Right ventricle myocardium inferior (tissue), 1 donor: ENCODE measurements at regions of chr13 and their contacts with region 1.

Region 1: DNA sequence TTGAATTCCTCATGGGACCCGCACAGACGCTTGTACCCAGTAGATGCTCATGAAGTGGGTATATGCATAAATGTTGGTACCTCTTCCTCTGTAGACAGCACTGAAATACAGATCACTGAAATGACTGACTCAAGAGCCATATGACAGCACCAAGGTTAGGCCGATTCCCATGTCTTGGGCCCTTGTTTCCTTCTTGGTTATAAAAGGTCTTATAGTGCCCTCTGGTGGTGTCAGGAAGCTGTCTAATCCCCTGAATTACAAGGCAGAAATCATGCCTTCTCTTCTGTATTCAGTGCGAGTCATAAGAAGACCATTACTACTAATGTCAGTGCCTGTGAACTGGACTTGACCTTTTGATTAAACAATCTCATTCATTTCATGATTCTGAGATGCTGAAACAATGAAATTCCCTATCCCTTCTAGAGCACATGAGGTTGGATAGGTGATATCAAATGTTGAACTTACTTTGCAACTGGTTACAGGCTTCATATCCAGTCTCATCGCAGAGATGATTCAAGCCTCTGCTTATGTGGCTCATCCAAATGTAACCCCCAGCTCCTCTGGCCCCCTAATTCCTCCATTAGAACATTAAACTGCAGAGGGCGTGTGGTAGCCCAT is 59.7 kb downstream of the SPATA13 start:
- DNase-seq: no peak
- ATAC-seq: peak; percentile 74

Region 2: DNA sequence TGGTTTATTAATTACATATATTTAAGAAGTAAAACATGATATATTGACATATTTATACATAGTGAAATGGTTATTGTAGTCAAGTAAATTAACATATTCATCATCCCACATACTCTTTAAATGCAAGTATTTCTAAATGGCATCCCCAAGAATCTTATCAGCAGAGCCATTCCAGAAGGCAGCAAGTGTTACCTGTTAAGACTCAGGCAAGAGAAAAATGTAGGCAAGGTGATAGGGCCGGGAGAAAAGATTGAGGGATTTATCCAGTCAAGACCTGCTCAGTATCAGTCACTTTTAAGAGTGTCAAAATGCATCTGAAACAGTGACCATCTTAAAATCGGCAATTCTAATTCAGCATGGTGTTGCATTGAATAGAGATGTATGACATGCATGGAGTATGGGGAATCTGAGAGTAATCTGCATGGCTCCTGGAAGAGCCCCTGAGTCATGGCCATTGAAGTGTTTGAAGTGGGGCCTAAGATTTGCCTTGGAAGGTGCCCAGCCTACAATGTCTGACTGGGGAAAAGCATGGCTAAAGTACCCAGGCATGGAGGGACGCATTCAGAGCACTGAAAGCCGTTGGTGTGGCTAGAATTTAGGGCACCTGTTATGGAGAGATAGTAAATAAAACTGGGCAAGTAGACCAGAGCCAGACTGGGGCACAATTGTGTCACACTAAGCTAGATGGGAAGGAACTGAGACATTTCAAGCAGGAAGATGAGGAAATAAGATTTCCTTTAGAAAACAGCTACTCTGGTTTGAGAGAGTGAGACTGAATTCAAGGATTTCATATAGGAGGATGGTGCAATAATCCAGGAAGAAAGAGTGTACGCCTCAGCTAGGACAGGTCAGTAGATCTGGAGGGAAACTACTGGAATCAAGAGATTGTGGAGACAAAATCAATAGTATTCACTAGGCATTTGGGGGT is 297.9 kb before region 1 on chr13:
- intact Hi-C with region 1: loop called (anchors 2 kb)
- DNase-seq: no peak
- ATAC-seq: no peak

Region 3: DNA sequence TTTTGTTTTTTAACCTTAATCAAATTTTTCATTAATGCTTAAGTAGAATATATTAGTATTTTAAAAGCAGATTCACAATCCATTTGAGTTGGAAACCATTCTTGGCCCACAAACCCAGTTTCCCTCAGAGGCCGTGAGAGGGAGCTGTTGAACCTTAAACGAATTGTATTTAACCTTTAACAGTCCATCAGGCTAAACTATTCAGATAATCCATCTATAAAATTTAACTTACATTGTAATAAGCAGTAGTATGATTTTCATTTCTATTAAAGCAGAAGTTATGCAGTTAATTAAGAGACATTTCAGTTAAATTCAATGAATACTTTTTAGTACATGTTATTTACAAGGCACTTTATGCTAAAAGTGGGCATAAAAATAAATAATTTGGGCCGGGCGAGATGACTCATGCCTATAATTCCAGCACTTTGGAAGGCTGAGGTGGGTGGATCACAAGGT is 199.8 kb before region 1 on chr13:
- intact Hi-C with region 1: loop called (anchors 2 kb)
- DNase-seq: no peak
- ATAC-seq: no peak

Region 4: GRCh38 chr13:24053519-24054251 is 166.5 kb before region 1 on chr13:
- intact Hi-C with region 1: loop called (anchors 1 kb)
- DNase-seq: no peak
- ATAC-seq: peak; percentile 53

Region 5: GRCh38 chr13:24160454-24161009 is 59.7 kb before region 1 on chr13 and contains the start of gene SPATA13:
- intact Hi-C with region 1: loop called (anchors 2 kb)
- DNase-seq: peak; percentile 97
- ATAC-seq: peak; percentile 98
- total RNA-seq, gene SPATA13: 9.9 TPM

Region 6: DNA sequence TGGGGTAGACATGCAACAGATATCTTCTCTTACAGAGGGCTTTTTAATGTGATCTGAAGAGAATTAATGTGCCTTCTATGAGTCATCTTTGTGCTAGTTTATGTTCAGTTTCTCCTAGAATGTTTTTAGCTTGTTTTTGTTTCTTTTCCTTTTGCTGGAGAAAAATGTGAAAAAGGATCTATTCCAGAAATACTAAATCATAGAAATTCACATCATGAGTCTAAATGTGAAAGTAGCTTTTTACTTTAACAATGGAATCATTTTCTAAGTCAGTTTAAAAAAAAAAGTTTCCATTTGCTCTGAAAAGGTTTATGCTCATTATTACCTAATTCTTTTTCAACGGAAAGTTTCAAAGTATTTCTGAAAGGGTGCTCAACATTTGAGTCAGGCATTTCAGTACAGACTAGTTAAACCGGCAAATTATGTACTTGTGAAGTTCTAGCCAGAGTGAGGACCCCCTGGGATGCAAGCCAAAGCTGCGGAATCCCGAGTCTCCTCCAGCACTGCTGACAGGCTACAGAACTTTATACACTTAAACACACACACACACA is 13.2 kb after region 1 on chr13:
- intact Hi-C with region 1: no loop called
- DNase-seq: no peak
- ATAC-seq: no peak

Region 7: GRCh38 chr13:24307211-24308067 is 87.2 kb after region 1 on chr13:
- intact Hi-C with region 1: no loop called
- DNase-seq: no peak
- ATAC-seq: no peak